Transverse colon (tissue), 4 donors: ENCODE measurements at regions of chr3 and their contacts with region 1.

Region 1: GRCh38 chr3:43363621-43364266 is 77.4 kb downstream of the SNRK start:
- DNase-seq: peak; percentile 37
- H3K4me3 ChIP-seq: no peak overlapping the region
- H3K27ac ChIP-seq: no peak overlapping the region
- H3K4me1 ChIP-seq: no peaks in the 10 kb centered on the region
- H3K27me3 ChIP-seq: no peaks in the 10 kb centered on the region
- CTCF ChIP-seq: no peak
- EP300 ChIP-seq: no peak
- POLR2A ChIP-seq: no peak

Region 2: DNA sequence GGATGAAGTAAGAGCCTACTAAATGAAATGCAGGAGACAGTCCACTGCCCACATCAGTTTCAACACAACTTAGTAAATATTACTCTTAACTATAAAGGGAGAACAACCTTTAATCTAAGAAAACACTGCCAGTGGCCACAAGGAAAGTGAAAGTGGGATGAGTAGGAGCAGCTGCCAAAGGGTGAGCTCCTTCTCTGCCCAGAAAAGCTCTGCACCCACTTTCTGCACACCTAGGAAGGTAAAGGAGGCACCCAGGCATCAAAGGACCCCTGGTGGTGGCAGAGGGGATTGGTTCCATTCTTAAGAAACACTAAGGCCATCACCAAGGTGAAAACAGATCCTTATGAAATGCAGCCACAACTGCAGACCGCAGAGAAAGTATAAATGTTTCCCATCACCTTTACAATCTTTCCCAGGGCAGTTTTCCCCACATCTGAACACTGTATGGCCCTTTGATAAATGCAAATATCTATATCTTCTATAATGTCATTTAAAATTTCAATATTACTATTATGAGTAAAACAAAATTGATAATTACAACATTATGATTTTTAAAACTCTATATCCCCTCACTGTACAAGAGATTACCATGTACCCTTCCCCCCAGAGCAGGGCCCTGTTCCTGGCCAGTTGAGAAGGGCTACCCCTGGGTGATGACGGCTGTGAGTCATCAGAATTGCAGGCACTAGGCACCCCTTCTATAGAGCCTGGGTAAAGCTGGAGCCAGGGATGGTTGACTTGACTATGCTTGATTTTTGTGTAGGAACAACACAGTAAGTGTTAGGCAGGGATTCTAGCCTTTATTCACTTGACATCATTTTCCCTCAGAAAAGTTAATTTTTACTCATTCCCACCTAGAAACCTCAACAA is 14.6 kb after region 1 on chr3:
- in situ Hi-C with region 1: no loop called
- intact Hi-C with region 1: loop called (anchors 1 kb)
- DNase-seq: peak; percentile 55
- H3K4me3 ChIP-seq: no peak overlapping the region
- H3K27ac ChIP-seq: peak overlapping the region in 3 of 4 donors; percentile 51 to 75 (median 52)
- H3K4me1 ChIP-seq: peaks cover 0 to 18% (median 3%) of the 10 kb centered on the region in 4 donors
- H3K27me3 ChIP-seq: no peaks in the 10 kb centered on the region
- CTCF ChIP-seq: peak; percentile 56 to 68 (median 59)
- EP300 ChIP-seq: no peak
- POLR2A ChIP-seq: no peak